Right ventricle myocardium inferior (tissue), 1 donor: ENCODE measurements at regions of chr2 and their contacts with region 1.

Region 1: DNA sequence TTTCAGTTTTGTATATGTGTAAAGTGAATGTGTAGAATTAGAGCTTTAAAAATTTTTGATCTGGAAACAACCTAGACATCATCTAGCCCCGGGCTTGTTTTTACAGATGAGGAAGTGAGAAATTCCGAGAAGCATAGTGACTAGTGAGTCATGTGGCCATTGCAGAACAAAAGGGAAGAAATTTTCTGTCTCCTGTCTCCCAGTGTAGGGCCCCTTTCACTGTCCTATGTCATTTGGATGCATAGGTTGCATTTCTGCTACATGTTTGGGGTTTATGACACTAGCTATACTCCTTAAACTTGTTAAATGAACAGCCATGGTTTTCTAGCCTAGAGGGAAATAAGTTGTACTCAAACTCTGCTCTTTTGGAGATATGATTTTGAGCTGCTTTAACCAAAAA is 84.6 kb downstream of the PLCL1 start:
- DNase-seq: no peak
- ATAC-seq: no peak

Region 2: DNA sequence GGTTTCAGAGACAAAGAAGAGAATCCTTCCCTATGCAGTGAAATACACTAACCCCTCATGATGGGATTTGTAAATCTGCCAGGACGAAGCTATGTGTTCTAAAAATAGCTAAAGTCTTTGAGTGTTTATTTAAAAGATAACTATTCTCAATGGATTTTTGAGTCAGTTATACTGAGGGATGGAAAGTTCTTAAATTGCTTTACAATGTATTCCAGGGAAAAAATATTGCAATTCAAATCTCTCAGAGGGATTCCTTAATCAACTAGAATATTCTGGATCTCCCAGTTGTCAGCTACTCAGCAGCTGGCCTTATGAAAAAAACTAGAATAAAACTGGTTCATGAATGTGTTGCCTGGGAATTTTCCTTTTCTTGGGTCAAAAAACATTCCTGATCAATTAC is 227.7 kb after region 1 on chr2:
- intact Hi-C with region 1: loop called (anchors 10 kb)
- DNase-seq: no peak
- ATAC-seq: no peak